Activated T-helper 1 cell treated with anti-CD3 and anti-CD28 coated beads, Interleukin-12 subunit alpha, Interleukin-12 subunit beta, Interleukin-2, Interleukin-4 antibody, amounts not matched to agents 30 ng/mL and 10 ng/mL and 1 ng/mL, durations not matched to agents 14 hours and 24 hours and 36 hours (primary cell): ENCODE measurements at regions of chr17 and their contacts with region 1.

Region 1: DNA sequence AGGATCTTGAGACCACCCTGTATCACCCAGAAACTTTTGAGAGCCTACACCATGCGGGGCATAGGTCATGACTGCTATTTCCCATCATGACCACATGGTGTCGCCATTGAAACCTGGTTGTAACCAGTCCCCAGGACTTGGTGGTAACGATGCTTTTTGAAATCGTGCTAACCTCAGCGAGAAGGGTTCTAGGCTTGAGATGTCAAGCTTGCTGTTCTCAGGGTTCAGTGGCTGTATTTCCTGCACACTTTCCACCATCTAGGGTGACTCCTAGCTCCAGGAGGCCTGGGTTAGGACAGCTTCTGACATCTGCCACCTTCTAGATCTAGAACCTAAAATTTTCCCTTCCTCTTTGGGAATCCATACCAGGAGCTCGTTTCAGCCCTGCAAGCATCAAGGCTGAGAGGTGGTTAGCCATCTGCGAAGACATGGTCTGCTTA is 13.0 kb upstream of the SPNS3 start:
- DNase-seq: peak; percentile 51
- H3K4me3 Mint-ChIP-seq: no peak overlapping the region
- H3K27ac Mint-ChIP-seq: no peak overlapping the region
- H3K4me1 Mint-ChIP-seq: no peaks in the 10 kb centered on the region
- H3K27me3 Mint-ChIP-seq: no peaks in the 10 kb centered on the region

Region 2: GRCh38 chr17:4215882-4216570 is 204.7 kb before region 1 on chr17:
- intact Hi-C with region 1: no loop called
- DNase-seq: no peak
- H3K4me3 Mint-ChIP-seq: no peak overlapping the region
- H3K27ac Mint-ChIP-seq: peak overlapping the region; percentile 15
- H3K4me1 Mint-ChIP-seq: peaks cover 21% of the 10 kb centered on the region
- H3K27me3 Mint-ChIP-seq: no peaks in the 10 kb centered on the region

Region 3: DNA sequence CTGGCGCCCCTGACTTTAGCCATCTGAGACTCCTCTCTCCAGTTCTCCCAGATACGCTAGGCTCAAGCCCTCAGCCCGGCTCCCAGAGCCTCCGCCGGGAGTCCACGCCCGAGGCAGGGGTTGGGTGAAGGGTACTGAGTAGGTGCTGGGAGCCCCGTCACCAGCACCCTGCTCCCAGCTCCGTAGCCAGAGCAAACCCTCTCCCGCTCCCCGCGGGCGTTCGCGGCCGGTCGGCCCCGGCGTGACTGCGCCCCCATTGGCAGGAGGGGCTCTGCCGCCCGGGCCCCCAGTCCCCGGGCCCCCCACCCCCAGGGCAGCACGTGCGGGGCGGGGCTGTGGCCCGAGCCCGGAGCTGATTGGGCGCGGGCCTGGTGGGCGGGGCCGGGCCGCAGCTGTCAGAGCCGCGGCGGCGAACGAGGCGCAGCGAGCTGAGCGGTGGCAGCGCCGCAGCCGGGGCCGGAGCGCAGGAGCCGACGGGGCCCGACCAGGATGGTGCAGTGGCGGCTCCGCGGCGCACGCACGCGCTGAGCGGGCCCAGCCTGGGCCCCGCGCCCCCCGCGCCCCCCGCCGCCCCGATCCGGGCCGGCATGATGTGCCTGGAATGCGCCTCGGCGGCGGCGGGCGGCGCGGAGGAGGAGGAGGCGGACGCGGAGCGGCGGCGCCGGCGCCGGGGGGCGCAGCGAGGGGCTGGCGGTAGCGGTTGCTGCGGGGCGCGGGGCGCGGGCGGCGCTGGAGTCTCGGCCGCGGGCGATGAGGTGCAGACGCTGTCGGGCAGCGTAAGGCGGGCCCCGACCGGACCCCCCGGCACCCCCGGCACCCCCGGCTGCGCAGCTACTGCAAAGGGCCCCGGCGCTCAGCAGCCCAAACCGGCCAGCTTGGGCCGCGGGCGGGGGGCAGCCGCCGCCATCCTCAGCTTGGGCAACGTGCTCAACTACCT is 78.0 kb after region 1 on chr17 and contains the start of gene SPNS2:
- intact Hi-C with region 1: loop called (anchors 5 kb)
- DNase-seq: peak; percentile 61
- H3K4me3 Mint-ChIP-seq: peak within 1 kb of the TSS; percentile 72
- H3K27ac Mint-ChIP-seq: no peak within 1 kb of the TSS
- H3K4me1 Mint-ChIP-seq: peaks cover 8% of the 10 kb centered on the region
- H3K27me3 Mint-ChIP-seq: peaks cover 47% of the 10 kb centered on the region
- total RNA-seq, gene SPNS2: 0.17 TPM in 1 of 2 replicates, not detected in the other

Region 4: GRCh38 chr17:4626734-4627256 is 206.1 kb after region 1 on chr17:
- intact Hi-C with region 1: loop called (anchors 1 kb)
- DNase-seq: no peak
- H3K4me3 Mint-ChIP-seq: no peak overlapping the region
- H3K27ac Mint-ChIP-seq: no peak overlapping the region
- H3K4me1 Mint-ChIP-seq: no peaks in the 10 kb centered on the region
- H3K27me3 Mint-ChIP-seq: peaks cover 20% of the 10 kb centered on the region

Region 5: GRCh38 chr17:4881761-4882555 is 461.2 kb after region 1 on chr17:
- intact Hi-C with region 1: loop called (anchors 10 kb)
- DNase-seq: peak; percentile 40
- H3K4me3 Mint-ChIP-seq: no peak overlapping the region
- H3K27ac Mint-ChIP-seq: no peak overlapping the region
- H3K4me1 Mint-ChIP-seq: peaks cover 5% of the 10 kb centered on the region
- H3K27me3 Mint-ChIP-seq: no peaks in the 10 kb centered on the region